ENCODE measurements at regions of chr9 and their contacts with region 1.

Region 1: DNA sequence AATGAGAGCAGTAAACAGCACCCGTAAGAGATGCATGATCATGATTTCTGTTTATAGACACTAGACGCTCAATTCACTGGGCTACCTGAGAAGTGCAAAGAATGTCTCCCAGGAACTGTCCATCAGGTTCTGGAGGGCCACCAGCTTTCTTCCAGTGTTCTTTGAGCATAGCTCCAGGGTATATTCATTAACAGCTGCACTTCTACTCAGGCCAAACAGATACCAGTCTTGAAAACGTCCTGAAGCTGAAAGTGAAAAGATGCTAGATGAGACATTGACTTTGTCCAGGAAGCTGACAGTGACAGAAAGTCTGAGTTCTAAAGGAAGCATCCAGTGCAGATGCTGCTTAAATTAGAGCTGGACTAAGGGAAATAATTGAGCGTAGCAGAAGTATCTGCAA is 488.7 kb upstream of the TYRP1 start:
- DNase-seq: no peak
- ATAC-seq: no peak
- H3K4me3 ChIP-seq: no peak overlapping the region
- H3K4me3 Mint-ChIP-seq: no peak overlapping the region
- H3K27ac ChIP-seq: no peak overlapping the region
- H3K27ac Mint-ChIP-seq: no peak overlapping the region
- H3K4me1 ChIP-seq: no peaks in the 10 kb centered on the region
- H3K4me1 Mint-ChIP-seq: no peaks in the 10 kb centered on the region
- H3K27me3 ChIP-seq: no peaks in the 10 kb centered on the region
- H3K27me3 Mint-ChIP-seq: no peaks in the 10 kb centered on the region
- CTCF ChIP-seq: no peak

Region 2: GRCh38 chr9:12141422-12141821 is 63.1 kb before region 1 on chr9:
- intact Hi-C with region 1: loop called (anchors 10 kb)
- DNase-seq: no peak
- ATAC-seq: no peak
- H3K4me3 ChIP-seq: no peak overlapping the region
- H3K4me3 Mint-ChIP-seq: no peak overlapping the region
- H3K27ac ChIP-seq: no peak overlapping the region
- H3K27ac Mint-ChIP-seq: no peak overlapping the region
- H3K4me1 ChIP-seq: no peaks in the 10 kb centered on the region
- H3K4me1 Mint-ChIP-seq: no peaks in the 10 kb centered on the region
- H3K27me3 ChIP-seq: no peaks in the 10 kb centered on the region
- H3K27me3 Mint-ChIP-seq: no peaks in the 10 kb centered on the region
- CTCF ChIP-seq: no peak

Measured in natural killer cell (primary cell).